ENCODE measurements at regions of chr4 and their contacts with region 1.

Region 1: DNA sequence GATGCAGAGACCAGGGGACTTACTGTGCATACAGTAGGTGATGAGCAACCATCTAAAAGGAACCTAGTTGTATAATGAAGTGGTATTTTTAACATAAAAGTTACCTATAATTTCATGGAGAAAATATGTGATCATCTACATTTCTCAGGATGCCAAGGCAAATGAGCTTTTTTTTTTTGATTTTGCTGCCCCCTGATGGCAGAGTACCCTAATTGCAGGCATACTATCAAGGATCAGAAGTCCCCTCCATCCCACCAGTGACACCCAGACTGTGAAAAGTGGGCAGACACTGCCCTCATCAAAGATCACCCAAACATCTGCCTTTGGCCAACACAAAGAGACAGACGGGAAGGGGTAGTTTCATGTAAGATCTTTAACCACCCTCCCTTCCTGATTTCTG is 9.6 kb upstream of the ABLIM2 start:
- DNase-seq: no peak
- H3K4me3 ChIP-seq: no peak overlapping the region
- H3K27ac ChIP-seq: no peak overlapping the region
- H3K4me1 ChIP-seq: no peaks in the 10 kb centered on the region
- H3K27me3 ChIP-seq: no peaks in the 10 kb centered on the region
- CTCF ChIP-seq: peak; percentile 25 to 52

Region 2: DNA sequence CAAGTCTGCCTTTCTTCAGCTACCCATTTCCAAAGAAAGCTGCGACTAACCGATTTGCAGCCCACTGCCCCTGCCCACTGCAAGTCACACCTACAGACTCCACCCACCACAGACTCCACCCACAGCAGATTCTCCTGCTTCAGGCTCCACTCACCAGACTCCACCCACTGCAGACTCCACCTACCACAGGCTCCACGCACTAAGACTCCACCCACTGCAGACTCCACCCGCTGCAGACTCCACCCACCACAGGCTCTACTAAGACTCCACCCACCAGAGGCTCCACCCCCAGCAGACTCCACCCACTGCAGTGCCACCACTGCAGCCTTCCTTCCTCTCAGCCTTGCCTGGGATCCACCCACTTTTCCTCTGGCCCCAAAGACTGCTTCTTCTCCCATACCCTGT is 51.0 kb before region 1 on chr4:
- CTCF ChIA-PET with region 1: no interaction called
- dilution Hi-C with region 1: loop called (anchors 5 kb)
- in situ Hi-C with region 1: no loop called
- intact Hi-C with region 1: no loop called
- DNase-seq: peak; percentile 6
- H3K4me3 ChIP-seq: no peak overlapping the region
- H3K27ac ChIP-seq: no peak overlapping the region
- H3K4me1 ChIP-seq: no peaks in the 10 kb centered on the region
- H3K27me3 ChIP-seq: peaks cover 4% of the 10 kb centered on the region
- CTCF ChIP-seq: no peak

Region 3: DNA sequence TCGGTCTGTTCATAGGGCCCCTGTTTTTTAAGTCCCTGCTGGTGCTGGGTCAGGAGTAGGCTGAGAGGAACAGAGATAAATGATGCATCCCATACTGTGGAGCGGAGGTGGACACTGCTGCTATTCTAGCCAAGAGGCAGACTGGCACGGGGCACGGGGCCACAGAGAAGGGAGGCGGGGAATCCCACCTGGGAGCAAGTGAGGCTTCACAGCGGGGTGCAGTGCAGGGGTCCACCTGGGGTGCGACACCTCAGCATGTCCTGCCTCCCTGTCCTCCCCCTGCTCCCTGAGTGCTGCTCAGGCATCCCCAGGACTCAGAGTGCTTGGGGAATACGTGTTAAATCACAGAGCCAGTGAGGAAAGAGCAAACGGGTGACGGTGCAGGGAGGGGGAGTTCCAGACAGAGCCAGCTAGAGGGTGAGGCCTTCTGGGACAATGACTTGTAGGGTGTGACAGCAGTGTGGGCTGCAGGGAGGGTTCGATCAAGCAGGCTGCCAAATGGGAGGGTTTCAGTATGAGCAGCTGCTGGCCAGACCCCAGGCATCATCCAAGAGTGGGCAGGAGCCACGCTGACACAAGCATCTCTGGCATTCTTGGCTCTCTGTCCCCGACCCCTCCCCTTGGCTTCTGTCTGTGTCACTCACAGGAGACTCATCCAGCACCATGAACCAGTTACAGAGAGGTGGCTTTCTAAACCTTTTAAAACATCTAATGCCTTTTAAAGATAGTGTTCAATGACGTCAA is 87.6 kb after region 1 on chr4:
- CTCF ChIA-PET with region 1: no interaction called
- dilution Hi-C with region 1: loop called (anchors 5 kb)
- in situ Hi-C with region 1: no loop called
- intact Hi-C with region 1: no loop called
- DNase-seq: no peak
- H3K4me3 ChIP-seq: no peak overlapping the region
- H3K27ac ChIP-seq: no peak overlapping the region
- H3K4me1 ChIP-seq: peaks cover 9% of the 10 kb centered on the region
- H3K27me3 ChIP-seq: no peaks in the 10 kb centered on the region
- CTCF ChIP-seq: no peak

Measured in mammary epithelial cell (primary cell).